ENCODE measurements at regions of chr2 and their contacts with region 1.

Region 1: GRCh38 chr2:20015472-20016083 is 3.1 kb upstream of the MATN3 start:
- DNase-seq: no peak
- ATAC-seq: peak; percentile 40
- H3K4me3 Mint-ChIP-seq: no peak overlapping the region
- H3K27ac Mint-ChIP-seq: no peak overlapping the region
- H3K4me1 Mint-ChIP-seq: peaks cover 12% of the 10 kb centered on the region
- H3K27me3 Mint-ChIP-seq: peaks cover 27% of the 10 kb centered on the region
- CTCF ChIP-seq: no peak

Region 2: DNA sequence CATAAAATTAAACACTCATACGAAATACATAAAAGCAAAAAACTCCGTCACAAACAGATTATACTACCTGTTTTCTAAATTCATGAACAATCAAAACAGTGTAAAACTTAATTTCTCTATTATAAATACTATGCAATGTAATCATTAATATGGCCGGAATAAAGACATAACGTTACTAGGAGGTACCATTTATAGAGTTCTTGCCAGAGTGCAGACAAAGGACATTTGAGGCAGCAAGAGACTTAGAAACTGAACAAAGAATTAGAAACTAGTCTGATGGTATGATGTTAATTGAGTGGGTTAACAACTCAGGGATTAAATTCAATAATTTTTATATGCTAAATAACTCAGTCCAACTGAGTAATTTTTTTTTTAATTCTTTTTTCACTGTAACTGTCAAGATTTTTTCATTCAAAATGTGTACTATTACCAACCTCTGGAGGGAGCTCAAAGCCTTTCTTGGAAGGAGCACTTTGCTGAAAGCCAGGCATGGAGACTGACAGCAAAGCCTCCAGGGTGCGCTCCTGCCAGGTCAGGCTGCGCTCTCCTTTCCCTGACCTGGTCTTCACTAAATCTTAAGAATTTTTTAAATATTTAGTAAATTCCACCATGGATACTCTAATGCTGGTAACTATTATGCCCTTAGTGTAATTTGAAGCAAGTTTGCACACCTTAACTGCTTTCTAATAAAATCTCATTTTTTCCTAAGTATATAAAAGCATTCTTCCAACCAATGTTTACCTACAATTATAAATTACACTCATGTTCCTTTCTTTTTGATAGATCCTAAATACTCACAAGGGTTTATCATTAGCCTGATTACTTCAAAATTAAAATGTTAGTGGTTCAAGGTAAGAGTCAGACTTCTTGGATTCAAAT is 59.8 kb before region 1 on chr2:
- CTCF ChIA-PET with region 1: interaction called, 8 read pairs
- POLR2A ChIA-PET with region 1: no interaction called
- intact Hi-C with region 1: loop called (anchors 2 kb)
- DNase-seq: no peak
- ATAC-seq: peak; percentile 83
- H3K4me3 Mint-ChIP-seq: no peak overlapping the region
- H3K27ac Mint-ChIP-seq: no peak overlapping the region
- H3K4me1 Mint-ChIP-seq: no peaks in the 10 kb centered on the region
- H3K27me3 Mint-ChIP-seq: no peaks in the 10 kb centered on the region
- CTCF ChIP-seq: peak; percentile 80

Region 3: DNA sequence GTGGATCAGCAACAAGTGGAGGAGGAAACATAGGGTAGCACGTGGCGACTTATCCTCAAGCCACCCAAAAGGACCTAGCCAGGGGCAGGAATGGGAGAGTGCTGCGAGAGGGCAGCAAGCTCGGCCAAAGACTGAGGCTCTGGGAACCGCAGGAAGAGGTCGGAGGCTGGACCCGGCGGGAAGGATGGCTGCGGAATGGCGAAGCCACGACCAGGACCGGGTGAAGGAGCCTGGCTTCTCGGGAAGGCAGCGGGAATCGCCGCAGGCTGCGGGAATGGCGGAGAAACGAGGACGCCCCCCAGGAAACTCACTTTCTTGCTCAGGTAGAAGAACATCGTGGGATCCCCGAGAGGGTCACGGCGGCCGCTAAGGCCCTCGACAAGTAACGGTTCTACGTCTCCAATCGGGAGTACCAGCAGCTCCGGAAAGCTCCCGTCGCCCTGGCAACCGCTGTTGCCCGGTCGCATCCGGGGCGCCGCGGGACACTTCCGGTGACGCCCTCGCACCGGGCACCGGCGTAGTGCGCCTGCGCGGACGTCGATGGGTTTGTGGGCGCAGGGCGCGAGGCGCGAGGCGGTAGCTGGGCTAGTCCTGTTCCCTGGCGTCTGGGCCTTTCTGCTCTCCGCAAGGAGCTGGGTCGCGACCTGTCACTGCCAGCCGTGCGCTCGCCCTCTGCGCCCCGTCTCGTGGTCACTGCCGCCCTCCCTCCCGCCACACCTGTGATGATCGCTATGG is 25.7 kb before region 1 on chr2 and contains the start of gene WDR35:
- CTCF ChIA-PET with region 1: interaction called, 3 read pairs
- POLR2A ChIA-PET with region 1: no interaction called
- intact Hi-C with region 1: loop called (anchors 2 kb)
- DNase-seq: peak; percentile 93
- ATAC-seq: peak; percentile 89
- H3K4me3 Mint-ChIP-seq: peak within 1 kb of the TSS; percentile 91
- H3K27ac Mint-ChIP-seq: peak within 1 kb of the TSS; percentile 85
- H3K4me1 Mint-ChIP-seq: peaks cover 31% of the 10 kb centered on the region
- H3K27me3 Mint-ChIP-seq: peaks cover 18% of the 10 kb centered on the region
- CTCF ChIP-seq: no peak
- total RNA-seq, gene WDR35: 8.1 and 8.2 TPM in 2 replicates

Region 4: GRCh38 chr2:20027705-20028434 is 12.3 kb after region 1 on chr2:
- CTCF ChIA-PET with region 1: interaction called, 12 read pairs
- POLR2A ChIA-PET with region 1: no interaction called
- intact Hi-C with region 1: no loop called
- DNase-seq: no peak
- ATAC-seq: no peak
- H3K4me3 Mint-ChIP-seq: no peak overlapping the region
- H3K27ac Mint-ChIP-seq: no peak overlapping the region
- H3K4me1 Mint-ChIP-seq: no peaks in the 10 kb centered on the region
- H3K27me3 Mint-ChIP-seq: no peaks in the 10 kb centered on the region
- CTCF ChIP-seq: no peak

Region 5: DNA sequence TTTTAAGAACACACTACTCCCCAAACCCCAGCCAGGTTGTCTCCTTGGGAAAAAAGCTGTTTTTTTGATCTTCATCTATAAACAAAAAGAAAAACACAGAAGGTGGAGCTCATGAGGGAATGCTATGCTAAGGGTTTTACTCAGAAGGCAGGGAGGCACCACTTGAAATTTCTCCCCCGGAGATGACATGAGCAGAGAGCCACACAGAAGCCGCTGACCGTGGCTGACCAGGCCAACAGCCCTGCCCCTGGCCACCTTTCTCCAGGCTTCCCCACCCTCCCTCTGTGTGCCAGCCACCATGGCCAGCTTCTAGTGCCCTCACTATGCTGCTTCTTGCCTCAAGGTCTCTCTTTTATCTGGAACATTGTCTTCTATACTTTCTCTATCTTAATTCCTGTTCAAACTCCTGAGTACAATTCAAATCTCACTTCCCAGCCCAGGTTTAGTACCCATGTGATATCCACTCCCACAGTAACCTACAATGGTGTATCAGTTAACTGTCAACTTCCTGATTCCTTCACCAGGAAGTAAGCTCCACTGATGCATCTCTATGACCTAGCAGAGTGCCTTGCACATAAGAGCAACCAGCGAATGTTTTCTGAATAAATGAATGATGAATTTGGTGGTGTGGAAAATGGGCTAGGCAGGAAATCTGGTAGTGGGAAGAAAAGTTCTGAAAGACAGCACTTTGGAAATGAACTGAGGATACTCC is 20.5 kb after region 1 on chr2:
- CTCF ChIA-PET with region 1: interaction called, 12 read pairs
- POLR2A ChIA-PET with region 1: interaction called, 4 read pairs
- intact Hi-C with region 1: no loop called
- DNase-seq: no peak
- ATAC-seq: peak; percentile 90
- H3K4me3 Mint-ChIP-seq: peak overlapping the region; percentile 21
- H3K27ac Mint-ChIP-seq: peak overlapping the region; percentile 79
- H3K4me1 Mint-ChIP-seq: peaks cover 33% of the 10 kb centered on the region
- H3K27me3 Mint-ChIP-seq: no peaks in the 10 kb centered on the region
- CTCF ChIP-seq: no peak

Region 6: DNA sequence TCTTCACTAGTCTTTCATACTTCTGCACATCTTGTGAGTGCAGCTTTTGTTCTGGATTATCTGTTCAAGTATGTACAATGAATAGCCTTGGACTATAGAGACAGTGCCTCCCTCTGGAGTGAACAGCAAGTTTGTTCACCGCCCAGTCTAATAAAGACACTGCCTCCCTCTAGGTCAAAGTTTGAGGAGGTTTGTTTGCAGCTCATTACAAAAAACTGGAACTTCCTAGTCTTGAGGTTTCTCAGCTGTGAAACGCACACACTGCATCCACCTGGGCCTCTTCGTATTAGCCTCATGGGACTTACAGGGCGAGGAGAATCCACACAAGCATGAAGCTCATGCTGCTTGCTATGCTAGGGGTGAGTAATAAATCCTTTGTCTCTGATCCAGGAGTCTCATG is 61.9 kb after region 1 on chr2:
- CTCF ChIA-PET with region 1: interaction called, 11 read pairs
- POLR2A ChIA-PET with region 1: no interaction called
- intact Hi-C with region 1: no loop called
- DNase-seq: no peak
- ATAC-seq: no peak
- H3K4me3 Mint-ChIP-seq: no peak overlapping the region
- H3K27ac Mint-ChIP-seq: no peak overlapping the region
- H3K4me1 Mint-ChIP-seq: peaks cover 4% of the 10 kb centered on the region
- H3K27me3 Mint-ChIP-seq: peaks cover 12% of the 10 kb centered on the region
- CTCF ChIP-seq: no peak

Region 7: DNA sequence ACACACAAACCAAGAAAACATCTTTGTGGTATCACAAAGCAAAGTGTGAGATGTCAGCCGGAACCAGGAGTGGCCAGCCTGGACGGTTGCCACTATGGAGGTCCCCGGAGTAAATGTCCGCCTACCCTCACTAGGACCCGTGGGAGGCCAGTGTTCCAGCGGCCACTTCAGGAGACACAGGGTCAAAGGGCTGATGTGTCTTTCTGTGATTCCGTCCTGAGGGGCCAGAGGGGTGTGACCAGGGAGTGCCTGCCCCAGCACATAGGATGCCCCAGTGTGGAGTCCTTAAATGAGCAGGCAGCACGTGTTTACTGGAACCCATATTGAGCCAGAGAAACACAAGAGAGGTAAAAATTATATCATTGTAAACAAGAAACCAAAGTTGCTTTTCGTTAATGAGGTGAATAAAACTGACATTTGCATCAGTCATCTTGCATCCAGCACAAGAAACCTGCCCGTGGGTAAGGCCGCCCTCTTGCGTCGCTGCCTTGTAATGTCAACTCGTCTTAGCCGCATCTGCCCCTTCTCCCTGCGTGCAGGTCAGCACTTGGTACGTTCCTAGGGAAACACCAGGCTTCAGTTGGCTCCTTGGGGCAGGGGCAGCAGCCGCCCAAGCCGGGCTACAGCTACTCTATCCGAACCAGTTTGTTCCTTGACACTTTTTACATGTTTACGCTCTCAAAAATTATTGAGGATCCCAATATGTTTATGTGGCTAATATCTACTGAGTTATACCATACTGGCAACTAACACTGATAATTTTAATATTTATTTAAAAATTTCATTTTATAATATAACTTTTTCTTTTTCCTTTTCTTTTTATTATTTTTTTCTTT is 82.5 kb after region 1 on chr2:
- CTCF ChIA-PET with region 1: interaction called, 39 read pairs
- POLR2A ChIA-PET with region 1: no interaction called
- intact Hi-C with region 1: loop called (anchors 1 kb)
- DNase-seq: peak; percentile 62
- ATAC-seq: peak; percentile 95
- H3K4me3 Mint-ChIP-seq: no peak overlapping the region
- H3K27ac Mint-ChIP-seq: no peak overlapping the region
- H3K4me1 Mint-ChIP-seq: no peaks in the 10 kb centered on the region
- H3K27me3 Mint-ChIP-seq: peaks cover 12% of the 10 kb centered on the region
- CTCF ChIP-seq: peak; percentile 96

Measured in activated B cell treated with CpG ODN at 0.5 μM for 24 hours (primary cell).